Motor neuron (in vitro differentiated cells): ENCODE measurements at regions of chr9 and their contacts with region 1.

Region 1: DNA sequence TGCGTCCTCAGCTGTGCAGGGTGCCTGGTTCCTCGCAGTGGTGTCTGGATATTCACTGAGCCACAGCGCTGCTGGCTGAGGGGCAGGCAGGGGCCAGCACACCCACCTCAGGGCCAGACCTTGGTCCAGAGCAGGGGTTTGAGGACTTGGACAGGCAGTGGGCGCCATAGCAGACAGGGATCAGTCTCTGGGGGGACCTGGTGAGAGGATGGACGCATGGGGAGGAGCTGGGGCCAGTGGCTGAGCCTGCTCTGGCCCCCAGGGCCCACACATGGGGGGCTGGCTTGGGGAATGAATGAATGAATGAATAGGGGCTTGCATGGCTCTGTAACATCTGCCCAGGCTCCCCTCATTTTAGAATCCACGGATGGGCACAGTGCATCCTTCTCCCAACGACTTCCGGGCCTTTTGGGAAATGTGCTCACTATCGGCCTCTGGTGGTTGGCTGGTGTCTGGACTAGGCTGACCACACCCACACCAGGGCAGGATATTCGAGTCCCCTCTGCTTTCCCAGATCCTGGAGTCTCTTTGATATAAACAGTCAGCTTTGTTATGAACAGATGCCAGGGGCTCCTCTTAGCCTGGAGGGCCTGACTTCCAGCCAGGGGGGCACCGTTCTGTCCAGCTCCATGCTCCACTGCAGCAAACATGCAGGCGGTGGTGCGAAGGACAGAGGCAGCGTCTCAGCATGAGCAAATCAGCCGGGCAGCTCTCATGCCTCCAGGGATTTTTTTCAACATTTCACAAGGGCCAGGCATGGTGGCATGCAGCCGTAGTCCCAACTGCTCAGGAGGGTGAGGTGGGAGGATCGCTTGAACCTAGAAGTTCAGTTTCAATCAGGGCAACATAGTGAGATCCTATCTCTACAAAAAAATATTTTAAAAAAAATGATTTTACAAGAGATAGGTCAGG is 62.6 kb downstream of the NEK6 start:
- ATAC-seq: peak; percentile 81 to 99 (median 88)
- H3K4me3 ChIP-seq: no peak overlapping the region
- H3K27ac ChIP-seq: no peak overlapping the region
- H3K4me1 ChIP-seq: no peaks in the 10 kb centered on the region

Region 2: DNA sequence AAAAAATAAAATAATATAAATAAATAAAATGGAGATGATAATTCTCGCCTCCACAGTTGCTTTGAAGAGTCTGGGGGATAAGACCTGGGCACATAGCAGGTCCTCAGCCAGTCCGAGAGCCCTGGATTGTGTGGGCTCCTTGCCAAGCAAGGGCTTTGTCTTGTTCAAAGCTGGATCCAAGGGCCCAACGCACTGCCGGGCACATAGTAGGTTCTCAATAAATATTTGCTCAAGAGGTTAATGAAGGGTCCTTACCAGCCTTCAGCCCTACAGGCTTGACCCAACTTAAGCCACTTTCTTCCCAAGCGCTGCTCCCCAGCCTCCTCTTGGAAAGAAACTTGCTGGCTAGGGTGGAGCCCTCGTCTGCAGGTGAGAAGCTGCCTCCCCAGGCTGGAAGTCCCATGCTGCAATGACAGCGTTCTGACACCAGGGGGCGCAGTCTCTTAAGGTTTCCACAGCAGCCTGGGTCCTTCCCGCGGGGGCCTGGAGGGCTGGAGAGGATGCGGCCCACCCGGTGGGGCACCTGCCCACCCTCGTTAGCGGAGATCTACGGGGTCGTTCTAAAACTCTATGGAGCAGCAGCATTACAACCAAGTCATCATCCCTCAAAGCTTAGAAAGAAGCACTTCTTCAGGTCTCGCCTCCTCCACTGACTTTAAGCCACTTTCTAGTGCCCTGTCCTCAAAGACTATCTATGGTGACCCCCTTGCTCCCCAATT is 193.6 kb before region 1 on chr9:
- in situ Hi-C with region 1: loop called in 2 of 9 experiments (anchors 25 kb)
- ATAC-seq: peak in 3 of 8 experiments; percentile 57 to 78 (median 58)
- H3K4me3 ChIP-seq: no peak overlapping the region
- H3K27ac ChIP-seq: no peak overlapping the region
- H3K4me1 ChIP-seq: peaks cover 0 to 4% of the 10 kb centered on the region in 2 donors

Region 3: GRCh38 chr9:124218438-124218982 is 101.8 kb before region 1 on chr9:
- in situ Hi-C with region 1: loop called in 1 of 9 experiments (anchors 25 kb)
- ATAC-seq: peak in 2 of 8 experiments; percentile 48 to 79
- H3K4me3 ChIP-seq: no peak overlapping the region
- H3K27ac ChIP-seq: no peak overlapping the region
- H3K4me1 ChIP-seq: peaks cover 0 to 4% of the 10 kb centered on the region in 2 donors